ENCODE measurements at regions of chrX and their contacts with region 1.

Region 1: GRCh38 chrX:49915361-49916222 is 6.8 kb upstream of the CLCN5 start:
- DNase-seq: peak; percentile 56
- H3K4me3 ChIP-seq: no peak overlapping the region
- H3K27ac ChIP-seq: no peak overlapping the region
- H3K4me1 ChIP-seq: no peaks in the 10 kb centered on the region
- H3K27me3 ChIP-seq: no peaks in the 10 kb centered on the region
- CTCF ChIP-seq: peak; percentile 96

Region 2: GRCh38 chrX:48156014-48156413 is 1759.6 kb before region 1 on chrX:
- intact Hi-C with region 1: no loop called
- DNase-seq: no peak
- H3K4me3 ChIP-seq: no peak overlapping the region
- H3K27ac ChIP-seq: no peak overlapping the region
- H3K4me1 ChIP-seq: no peaks in the 10 kb centered on the region
- H3K27me3 ChIP-seq: no peaks in the 10 kb centered on the region
- CTCF ChIP-seq: no peak

Region 3: DNA sequence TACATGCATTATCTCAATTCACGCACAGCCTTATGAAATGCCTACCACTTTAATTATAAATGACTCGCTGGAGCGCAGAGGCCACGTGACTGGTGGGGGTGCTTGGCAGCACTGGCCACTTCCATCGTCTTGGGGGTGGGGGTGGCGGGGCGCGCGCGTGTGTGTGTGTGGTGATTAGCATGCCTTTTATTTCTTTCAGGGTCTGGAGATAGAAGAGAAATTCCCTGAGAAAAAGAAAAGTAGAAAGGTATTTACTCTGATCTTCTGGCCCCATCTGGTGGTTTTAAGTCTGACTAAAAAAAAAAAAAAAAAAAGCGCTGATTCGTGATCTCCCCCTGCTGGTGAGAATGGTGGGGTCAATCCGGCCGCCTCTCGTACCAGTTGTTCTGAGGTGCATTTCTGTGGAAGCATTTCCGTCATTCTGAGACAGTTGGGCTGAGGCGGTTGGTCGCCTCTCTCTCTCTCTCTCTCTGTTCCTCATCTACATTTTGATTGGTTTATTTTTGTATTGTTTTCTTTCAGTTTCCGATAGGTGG is 288.8 kb after region 1 on chrX and contains the start of gene CCNB3:
- intact Hi-C with region 1: loop called (anchors 5 kb)
- DNase-seq: peak; percentile 63
- H3K4me3 ChIP-seq: no peak within 1 kb of the TSS
- H3K27ac ChIP-seq: no peak within 1 kb of the TSS
- H3K4me1 ChIP-seq: no peaks in the 10 kb centered on the region
- H3K27me3 ChIP-seq: no peaks in the 10 kb centered on the region
- CTCF ChIP-seq: peak; percentile 71
- total RNA-seq, gene CCNB3: 0.11 to 0.30 TPM

Measured in colonic mucosa (tissue), 4 donors.